GM12878 (cell line): ENCODE measurements at regions of chr14 and their contacts with region 1.

Region 1: DNA sequence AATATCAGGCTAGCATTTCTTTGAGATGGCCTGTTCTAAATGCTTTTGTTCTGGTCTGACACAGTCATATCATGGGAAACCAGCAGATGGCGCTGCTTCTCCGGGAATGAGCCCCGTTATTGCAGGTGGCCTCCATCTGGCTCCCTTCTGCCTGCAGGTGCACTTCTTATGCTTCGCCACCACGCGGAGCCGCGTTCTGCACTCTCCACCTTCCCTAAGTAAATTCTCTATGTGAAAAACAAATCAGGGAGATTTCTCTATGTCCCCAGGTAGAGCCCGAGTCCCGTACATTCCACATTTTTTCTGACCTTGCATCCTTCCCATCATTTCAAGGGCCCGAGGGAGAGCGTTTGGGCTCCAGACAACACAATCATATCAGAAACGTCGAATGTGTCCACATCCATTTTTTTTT is 26.2 kb downstream of the GLRX5 start:
- DNase-seq: peak; percentile 71
- ATAC-seq: peak; percentile 95
- H3K4me3 ChIP-seq: no peak overlapping the region
- H3K27ac ChIP-seq: no peak overlapping the region
- H3K4me1 ChIP-seq: peaks cover 6% of the 10 kb centered on the region; the same call in 1 of the 2 replicates
- H3K27me3 ChIP-seq: no peaks in the 10 kb centered on the region
- CTCF ChIP-seq: peak; percentile 94 to 100 (median 99)
- EP300 ChIP-seq: no peak
- POLR2A ChIP-seq: no peak
- RAD21 ChIP-seq: peak; percentile 97

Region 2: GRCh38 chr14:95431199-95432143 is 129.5 kb before region 1 on chr14:
- CTCF ChIA-PET with region 1: interaction called, 25 read pairs
- POLR2A ChIA-PET with region 1: no interaction called
- RAD21 ChIA-PET with region 1: no interaction called
- SMC1A ChIA-PET with region 1: interaction called, 4 read pairs
- in situ Hi-C with region 1: no loop called
- intact Hi-C with region 1: no loop called
- DNase-seq: no peak
- ATAC-seq: peak; percentile 76
- H3K4me3 ChIP-seq: no peak overlapping the region
- H3K27ac ChIP-seq: no peak overlapping the region
- H3K4me1 ChIP-seq: no peaks in the 10 kb centered on the region
- H3K27me3 ChIP-seq: no peaks in the 10 kb centered on the region
- CTCF ChIP-seq: peak; percentile 28 to 46 (median 42); a peak in 4 of 6 replicates
- EP300 ChIP-seq: no peak
- POLR2A ChIP-seq: no peak
- RAD21 ChIP-seq: peak; percentile 61

Region 3: DNA sequence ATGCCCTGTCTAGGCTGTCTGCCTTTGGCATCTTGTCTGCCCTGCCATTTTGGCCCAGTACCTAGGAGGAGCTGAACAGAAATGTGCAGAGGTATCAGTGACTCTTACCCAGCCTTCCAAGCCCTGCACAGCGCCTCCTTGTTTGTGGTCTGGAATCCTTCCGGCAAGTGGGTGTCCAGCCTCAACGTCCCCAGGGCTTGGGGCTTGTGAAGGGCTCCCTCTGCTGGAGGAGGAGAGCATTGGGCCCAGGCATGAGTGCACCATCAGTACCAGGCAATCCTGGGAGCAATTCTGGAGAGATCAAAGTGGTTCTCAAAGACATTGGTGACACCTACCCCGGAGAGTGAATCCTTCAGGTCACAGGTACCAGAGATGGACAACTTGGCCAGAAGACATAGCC is 122.8 kb after region 1 on chr14:
- CTCF ChIA-PET with region 1: interaction called, 217 read pairs
- POLR2A ChIA-PET with region 1: no interaction called
- RAD21 ChIA-PET with region 1: interaction called, 35 read pairs
- SMC1A ChIA-PET with region 1: interaction called, 68 read pairs
- in situ Hi-C with region 1: loop called (anchors 10 kb)
- intact Hi-C with region 1: loop called (anchors 1 kb)
- DNase-seq: no peak
- ATAC-seq: peak; percentile 94
- H3K4me3 ChIP-seq: no peak overlapping the region
- H3K27ac ChIP-seq: no peak overlapping the region
- H3K4me1 ChIP-seq: peaks cover 8% of the 10 kb centered on the region
- H3K27me3 ChIP-seq: no peaks in the 10 kb centered on the region; a peak in 1 of 4 replicates
- CTCF ChIP-seq: peak; percentile 90 to 99 (median 97)
- EP300 ChIP-seq: no peak
- POLR2A ChIP-seq: no peak
- RAD21 ChIP-seq: peak; percentile 95

Region 4: DNA sequence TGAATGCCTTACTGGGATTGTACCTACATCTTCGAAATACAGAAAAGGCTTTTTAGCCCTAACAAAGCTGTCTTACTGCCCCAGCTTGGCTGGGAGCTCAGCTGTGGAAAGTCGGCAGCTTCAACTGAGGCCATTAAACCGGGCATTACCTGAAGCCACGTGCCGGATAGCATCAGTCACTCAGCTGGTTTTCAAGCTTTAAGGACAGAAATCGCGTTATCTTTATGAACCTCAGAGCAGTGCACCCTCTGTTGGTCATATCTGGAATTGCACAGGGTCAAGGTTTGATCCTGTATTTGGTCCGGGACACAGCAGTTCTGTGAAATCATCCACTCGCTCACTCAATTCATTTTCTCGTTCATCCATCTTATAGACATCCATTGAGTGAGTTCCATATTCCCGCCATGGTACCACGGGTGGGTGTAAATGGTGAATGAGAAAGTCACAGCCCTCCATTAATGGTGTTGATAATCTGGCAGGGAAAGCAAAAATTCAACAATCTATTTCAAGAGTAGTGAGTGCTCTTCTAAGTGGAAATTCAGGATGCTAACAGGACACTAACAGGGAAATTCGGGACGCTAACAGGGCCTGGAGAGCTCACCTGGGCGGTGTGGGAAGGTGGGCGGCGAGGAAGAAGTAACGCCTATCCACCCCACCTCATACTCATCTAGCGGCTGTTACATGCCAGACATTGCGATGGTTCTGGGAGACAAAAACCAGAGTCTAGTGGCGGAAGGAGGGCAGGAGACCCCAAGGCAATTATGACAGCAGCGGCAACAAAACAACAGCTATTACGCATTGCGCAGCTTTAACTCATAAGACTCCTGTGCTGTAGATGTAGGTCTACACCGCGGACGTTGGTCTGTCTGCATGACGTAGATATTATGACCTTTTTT is 213.5 kb after region 1 on chr14:
- CTCF ChIA-PET with region 1: interaction called, 54 read pairs
- POLR2A ChIA-PET with region 1: interaction called, 3 read pairs
- RAD21 ChIA-PET with region 1: interaction called, 12 read pairs
- SMC1A ChIA-PET with region 1: interaction called, 12 read pairs
- in situ Hi-C with region 1: loop called (anchors 5 kb)
- intact Hi-C with region 1: loop called (anchors 1 kb)
- DNase-seq: peak; percentile 16
- ATAC-seq: peak; percentile 76
- H3K4me3 ChIP-seq: no peak overlapping the region
- H3K27ac ChIP-seq: no peak overlapping the region
- H3K4me1 ChIP-seq: no peaks in the 10 kb centered on the region
- H3K27me3 ChIP-seq: no peaks in the 10 kb centered on the region
- CTCF ChIP-seq: peak; percentile 86 to 97 (median 92)
- EP300 ChIP-seq: no peak
- POLR2A ChIP-seq: no peak
- RAD21 ChIP-seq: peak; percentile 78

Region 5: GRCh38 chr14:96275177-96276112 is 714.4 kb after region 1 on chr14:
- CTCF ChIA-PET with region 1: interaction called, 3 read pairs
- POLR2A ChIA-PET with region 1: no interaction called
- RAD21 ChIA-PET with region 1: no interaction called
- SMC1A ChIA-PET with region 1: interaction called, 6 read pairs
- in situ Hi-C with region 1: loop called (anchors 5 kb)
- intact Hi-C with region 1: loop called (anchors 5 kb)
- DNase-seq: peak; percentile 7
- ATAC-seq: peak; percentile 86
- H3K4me3 ChIP-seq: no peak overlapping the region
- H3K27ac ChIP-seq: no peak overlapping the region
- H3K4me1 ChIP-seq: no peaks in the 10 kb centered on the region
- H3K27me3 ChIP-seq: no peaks in the 10 kb centered on the region
- CTCF ChIP-seq: peak; percentile 87 to 95 (median 89)
- EP300 ChIP-seq: no peak
- POLR2A ChIP-seq: no peak
- RAD21 ChIP-seq: peak; percentile 81